GM18951 (cell line): ENCODE measurements at regions of chr11 and their contacts with region 1.

Region 1: DNA sequence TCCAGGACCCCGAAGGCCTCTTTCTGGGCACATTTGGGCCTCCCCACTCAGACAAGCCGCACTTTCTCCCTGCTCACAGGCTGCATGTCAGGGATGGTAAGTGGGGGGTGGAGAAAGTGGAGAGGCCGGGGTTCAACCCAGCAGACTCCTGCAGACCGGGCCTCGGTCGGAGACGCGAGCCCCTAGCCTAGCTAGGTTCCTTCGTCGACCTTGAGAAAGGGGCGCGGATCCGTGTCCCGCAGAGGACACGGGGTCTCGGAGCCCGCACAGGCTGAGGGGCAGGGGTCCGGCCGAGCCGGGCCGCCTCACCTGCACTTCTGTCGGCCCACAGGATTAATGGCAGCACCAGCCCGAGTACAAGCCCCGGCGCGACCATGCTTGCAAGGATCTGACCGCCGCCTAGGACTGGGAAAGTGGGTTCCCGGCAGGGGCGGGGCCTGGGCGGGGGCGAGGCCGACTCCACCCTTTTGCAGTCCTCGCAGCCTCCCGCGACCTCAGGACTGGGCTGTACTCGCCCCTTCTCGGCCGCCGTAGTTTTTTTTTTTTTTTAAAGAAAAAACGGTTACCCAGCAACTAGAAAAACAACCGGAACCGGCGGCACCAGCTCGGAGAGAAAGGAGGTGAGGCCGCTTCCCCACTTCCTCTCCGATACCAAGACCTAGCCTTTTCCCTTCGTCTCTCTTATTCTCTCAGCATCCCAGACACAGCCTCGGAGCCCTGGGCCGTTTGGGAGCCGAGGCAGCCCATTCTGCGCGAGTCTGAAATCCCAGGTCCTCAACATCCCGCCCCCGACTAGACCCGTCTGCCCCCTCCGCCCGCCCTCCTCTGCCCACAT is at the starts of genes SIAE and SPA17:
- POLR2A ChIP-seq: peak; percentile 77

Region 2: GRCh38 chr11:124753205-124753604 is 79.7 kb after region 1 on chr11:
- in situ Hi-C with region 1: no loop called
- POLR2A ChIP-seq: no peak

Region 3: GRCh38 chr11:124763156-124763947 is 89.8 kb after region 1 on chr11:
- in situ Hi-C with region 1: loop called (anchors 10 kb)
- POLR2A ChIP-seq: no peak

Region 4: DNA sequence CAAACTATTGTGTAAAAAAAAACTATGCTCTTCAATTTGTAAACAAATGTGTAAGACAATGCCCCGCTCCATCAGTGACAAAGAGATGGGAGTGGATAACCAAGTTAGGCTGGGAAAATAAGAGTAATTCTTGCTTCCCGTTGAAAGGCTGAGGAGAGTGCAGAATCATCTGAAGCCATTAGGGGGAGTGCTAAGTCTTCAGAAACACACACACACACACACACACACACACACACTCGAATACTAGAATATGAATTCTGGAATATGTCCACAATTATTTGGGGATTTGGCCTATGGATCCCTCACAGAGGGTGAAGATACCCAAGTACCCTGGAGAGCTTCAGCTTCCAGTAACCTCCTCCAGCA is 163.9 kb after region 1 on chr11:
- in situ Hi-C with region 1: loop called (anchors 10 kb)
- POLR2A ChIP-seq: no peak

Region 5: DNA sequence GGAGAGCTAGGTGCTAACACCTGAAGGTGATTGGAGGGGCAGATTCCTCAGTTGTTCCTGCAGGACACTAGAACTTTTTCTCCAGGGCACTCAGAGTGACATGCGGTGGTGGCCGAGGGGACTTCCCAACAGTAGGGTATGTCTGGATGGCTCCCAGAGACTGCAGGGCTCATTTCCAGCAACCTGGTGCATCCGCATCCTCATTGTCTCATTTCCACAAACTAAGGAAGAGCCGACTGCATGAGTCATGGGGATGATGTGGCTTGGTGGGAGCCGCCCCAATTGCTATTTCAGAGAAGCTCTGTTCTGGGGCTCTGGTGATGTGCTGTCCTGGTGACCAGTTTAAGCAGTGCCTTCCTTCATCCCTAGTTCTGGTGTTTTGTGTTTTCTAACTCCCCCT is 226.9 kb after region 1 on chr11:
- in situ Hi-C with region 1: no loop called
- POLR2A ChIP-seq: no peak

Region 6: DNA sequence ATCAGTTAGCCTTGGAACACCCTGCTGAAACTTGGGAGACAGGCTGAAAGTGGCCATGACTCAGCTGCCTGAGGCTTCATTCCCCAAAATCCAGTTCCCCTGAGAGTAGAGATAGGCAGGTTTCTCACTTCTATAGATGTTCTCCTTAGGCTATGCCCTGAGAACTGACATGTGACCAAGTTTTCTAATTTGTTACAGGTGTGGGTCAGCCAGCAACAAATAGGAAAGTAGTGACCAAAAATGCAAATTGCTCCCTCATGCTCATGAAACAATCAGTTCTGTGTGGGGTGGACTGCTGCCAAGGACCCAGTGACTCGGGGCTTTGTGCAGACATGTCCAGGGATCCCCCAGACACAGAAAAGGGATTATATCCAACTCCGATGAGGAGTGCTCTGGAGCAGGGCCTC is 273.2 kb after region 1 on chr11:
- in situ Hi-C with region 1: no loop called
- POLR2A ChIP-seq: no peak